Activated CD4-positive, alpha-beta memory T cell treated with anti-CD3 and anti-CD28 coated beads for 36 hours (primary cell): ENCODE measurements at regions of chr18 and their contacts with region 1.

Region 1: GRCh38 chr18:31399306-31400032 is 22.9 kb downstream of the DSG4 start:
- DNase-seq: no peak
- H3K4me3 Mint-ChIP-seq: no peak overlapping the region
- H3K27ac Mint-ChIP-seq: no peak overlapping the region
- H3K4me1 Mint-ChIP-seq: no peaks in the 10 kb centered on the region
- H3K27me3 Mint-ChIP-seq: no peaks in the 10 kb centered on the region

Region 2: GRCh38 chr18:31429621-31430020 is 30.2 kb after region 1 on chr18:
- CTCF ChIA-PET with region 1: no interaction called
- POLR2A ChIA-PET with region 1: no interaction called
- intact Hi-C with region 1: loop called (anchors 1 kb)
- DNase-seq: no peak
- H3K4me3 Mint-ChIP-seq: no peak overlapping the region
- H3K27ac Mint-ChIP-seq: no peak overlapping the region
- H3K4me1 Mint-ChIP-seq: no peaks in the 10 kb centered on the region
- H3K27me3 Mint-ChIP-seq: no peaks in the 10 kb centered on the region

Region 3: DNA sequence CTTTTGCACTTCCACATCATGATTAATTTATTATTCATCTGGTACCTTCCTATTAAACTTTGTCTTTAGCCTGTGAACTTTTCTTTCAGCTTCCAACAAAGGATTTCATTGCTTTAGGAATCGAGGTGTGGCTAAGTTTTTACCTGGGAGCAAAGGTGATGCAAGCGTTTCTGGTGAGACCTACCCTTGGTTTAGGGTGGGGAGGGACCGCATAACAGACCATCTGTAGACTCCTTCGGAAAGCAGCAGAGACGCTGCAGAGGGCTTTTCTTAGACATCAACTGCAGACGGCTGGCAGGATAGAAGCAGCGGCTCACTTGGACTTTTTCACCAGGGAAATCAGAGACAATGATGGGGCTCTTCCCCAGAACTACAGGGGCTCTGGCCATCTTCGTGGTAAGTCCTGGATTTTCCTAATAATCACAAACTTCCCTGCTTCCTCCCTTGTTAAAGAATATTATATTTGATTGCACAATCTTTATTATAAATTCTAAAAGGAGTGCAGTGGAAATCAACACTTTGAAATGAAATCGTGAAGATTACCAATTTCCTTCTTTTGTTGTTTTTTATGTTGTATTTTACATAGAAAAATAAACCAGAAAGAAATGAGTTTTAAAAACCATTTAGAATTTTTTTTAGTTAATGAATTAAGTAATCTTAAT is 48.2 kb after region 1 on chr18 and contains the start of gene DSG3:
- CTCF ChIA-PET with region 1: no interaction called
- POLR2A ChIA-PET with region 1: no interaction called
- intact Hi-C with region 1: loop called (anchors 5 kb)
- DNase-seq: no peak
- H3K4me3 Mint-ChIP-seq: no peak within 1 kb of the TSS
- H3K27ac Mint-ChIP-seq: no peak within 1 kb of the TSS
- H3K4me1 Mint-ChIP-seq: no peaks in the 10 kb centered on the region
- H3K27me3 Mint-ChIP-seq: no peaks in the 10 kb centered on the region
- total RNA-seq, gene DSG3: not detected

Region 4: DNA sequence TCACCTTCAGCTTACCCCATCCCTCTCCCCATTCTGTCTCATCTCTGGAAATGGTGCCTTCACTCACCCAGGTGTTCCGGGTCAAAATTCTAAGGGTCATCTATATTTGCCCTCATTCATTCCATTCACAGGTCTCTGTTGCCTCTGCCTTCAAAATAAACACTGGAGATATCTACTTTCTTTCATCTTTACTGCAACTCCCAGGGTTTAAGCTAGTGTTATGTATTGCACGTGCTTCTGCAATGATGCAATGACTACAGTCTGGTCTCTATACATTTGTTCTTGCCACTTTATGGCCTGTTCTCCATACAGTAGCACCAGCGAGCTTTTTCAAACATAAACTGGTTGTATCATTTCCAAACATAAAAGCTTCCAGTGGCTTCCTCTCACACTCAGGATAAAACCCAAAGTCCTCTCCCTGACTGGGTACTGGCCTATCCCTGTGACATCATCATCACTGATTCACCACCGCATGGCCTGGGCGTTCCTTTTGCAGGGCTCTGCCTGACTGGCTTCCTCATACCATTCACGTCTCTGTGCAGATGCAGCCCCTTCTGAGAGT is 112.8 kb after region 1 on chr18:
- CTCF ChIA-PET with region 1: no interaction called
- POLR2A ChIA-PET with region 1: no interaction called
- intact Hi-C with region 1: no loop called
- DNase-seq: no peak
- H3K4me3 Mint-ChIP-seq: no peak overlapping the region
- H3K27ac Mint-ChIP-seq: no peak overlapping the region
- H3K4me1 Mint-ChIP-seq: no peaks in the 10 kb centered on the region
- H3K27me3 Mint-ChIP-seq: peaks cover 5% of the 10 kb centered on the region